Activated B cell treated with CpG ODN at 0.5 μM for 24 hours (primary cell): ENCODE measurements at regions of chr3 and their contacts with region 1.

Region 1: GRCh38 chr3:123584988-123585937 is at the start of gene HACD2:
- DNase-seq: peak; percentile 94
- ATAC-seq: peak; percentile 93
- H3K4me3 Mint-ChIP-seq: no peak within 1 kb of the TSS
- H3K27ac Mint-ChIP-seq: peak within 1 kb of the TSS; percentile 82
- H3K4me1 Mint-ChIP-seq: peaks cover 25% of the 10 kb centered on the region
- H3K27me3 Mint-ChIP-seq: no peaks in the 10 kb centered on the region
- CTCF ChIP-seq: no peak
- total RNA-seq, gene HACD2: 31.9 and 32.9 TPM in 2 replicates

Region 2: DNA sequence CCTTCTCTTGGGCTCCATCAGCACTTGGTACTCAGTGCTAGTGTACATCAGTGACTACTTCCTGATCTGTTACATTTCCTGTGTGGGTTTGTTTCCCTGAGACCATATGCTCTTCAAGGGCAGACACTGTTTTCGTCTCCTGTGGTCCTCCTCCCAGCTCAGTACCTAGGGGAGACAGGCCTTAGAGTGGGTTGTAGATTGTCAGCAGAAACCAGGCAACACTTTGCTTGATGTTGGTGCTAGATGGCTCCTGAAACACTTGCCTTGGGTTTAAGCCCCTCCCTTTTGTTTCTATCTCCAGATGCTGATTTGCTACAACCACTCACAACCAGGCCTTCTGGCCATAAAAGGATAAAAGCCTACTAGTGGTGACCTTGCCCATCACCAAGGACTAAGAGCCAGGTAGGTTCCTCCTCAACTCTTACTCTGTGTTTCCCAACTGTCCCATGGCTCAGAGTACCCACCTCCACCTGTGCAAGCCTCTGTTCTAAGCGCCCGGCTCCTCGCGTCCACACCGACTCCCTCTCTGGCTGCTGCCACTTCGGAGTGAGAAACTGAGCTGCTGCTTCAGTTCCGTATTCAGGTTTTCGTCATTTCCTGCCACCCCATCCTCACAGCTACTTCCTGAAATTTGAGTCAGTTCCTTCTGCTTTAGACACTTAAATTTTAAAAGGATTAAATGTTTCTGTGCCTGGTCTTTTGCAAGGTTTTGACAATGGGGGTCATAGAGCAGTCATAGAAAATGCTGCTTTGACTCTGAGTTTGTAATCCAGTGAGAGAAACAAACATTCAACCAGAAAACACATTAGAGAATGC is 1924.7 kb before region 1 on chr3 and contains the start of gene HCLS1:
- CTCF ChIA-PET with region 1: no interaction called
- POLR2A ChIA-PET with region 1: no interaction called
- intact Hi-C with region 1: loop called (anchors 10 kb)
- DNase-seq: peak; percentile 73
- ATAC-seq: peak; percentile 85
- H3K4me3 Mint-ChIP-seq: peak within 1 kb of the TSS; percentile 90
- H3K27ac Mint-ChIP-seq: peak within 1 kb of the TSS; percentile 96
- H3K4me1 Mint-ChIP-seq: peaks cover 55% of the 10 kb centered on the region
- H3K27me3 Mint-ChIP-seq: no peaks in the 10 kb centered on the region
- CTCF ChIP-seq: no peak
- total RNA-seq, gene HCLS1: 434 and 440 TPM in 2 replicates

Region 3: GRCh38 chr3:122383771-122384697 is 1201.2 kb before region 1 on chr3 and contains the start of gene FAM162A:
- CTCF ChIA-PET with region 1: no interaction called
- POLR2A ChIA-PET with region 1: no interaction called
- intact Hi-C with region 1: loop called (anchors 1 kb)
- DNase-seq: peak; percentile 93
- ATAC-seq: peak; percentile 94
- H3K4me3 Mint-ChIP-seq: peak within 1 kb of the TSS; percentile 94
- H3K27ac Mint-ChIP-seq: peak within 1 kb of the TSS; percentile 91
- H3K4me1 Mint-ChIP-seq: peaks cover 38% of the 10 kb centered on the region
- H3K27me3 Mint-ChIP-seq: no peaks in the 10 kb centered on the region
- CTCF ChIP-seq: no peak
- total RNA-seq, gene FAM162A: 28.5 and 33.9 TPM in 2 replicates

Region 4: DNA sequence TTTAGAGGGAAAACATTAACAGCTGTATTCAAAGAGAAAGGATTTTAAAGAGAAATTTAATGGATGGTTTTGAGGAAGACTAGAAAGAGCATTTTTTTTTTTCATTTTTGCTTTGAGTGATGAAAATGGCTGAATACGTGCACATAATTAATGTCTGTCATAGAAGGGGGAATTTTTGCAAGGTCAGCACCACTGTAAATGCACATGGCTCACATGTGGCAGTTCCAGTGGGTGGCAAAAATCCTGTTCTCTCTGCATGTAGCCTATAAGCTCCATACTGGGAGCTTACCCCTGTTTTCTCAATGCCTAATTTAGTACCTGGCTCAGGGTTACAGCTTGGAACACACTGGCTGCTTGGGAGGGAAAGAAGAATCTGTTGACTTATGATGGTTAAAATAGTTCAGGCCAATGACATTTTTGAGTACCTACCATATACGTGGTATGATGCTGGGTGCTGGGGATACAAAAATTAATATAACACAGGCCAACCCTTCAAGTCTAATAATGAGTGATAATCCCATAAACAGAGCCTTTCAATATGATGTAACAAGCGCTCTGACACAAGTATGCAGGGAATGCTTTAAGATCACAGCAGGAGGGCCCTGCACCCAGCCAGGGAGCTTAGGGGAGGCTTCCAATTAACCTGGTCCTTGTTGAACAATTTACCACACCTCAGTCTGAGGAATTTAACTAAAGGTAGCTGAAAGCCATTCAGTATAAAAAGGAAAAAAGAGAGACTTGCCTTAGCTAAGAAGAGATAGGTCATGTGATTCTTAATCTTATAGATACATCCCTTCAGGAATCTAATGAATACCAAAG is 824.6 kb before region 1 on chr3:
- CTCF ChIA-PET with region 1: no interaction called
- POLR2A ChIA-PET with region 1: interaction called, 10 read pairs
- intact Hi-C with region 1: no loop called
- DNase-seq: no peak
- ATAC-seq: no peak
- H3K4me3 Mint-ChIP-seq: no peak overlapping the region
- H3K27ac Mint-ChIP-seq: no peak overlapping the region
- H3K4me1 Mint-ChIP-seq: peaks cover 9% of the 10 kb centered on the region
- H3K27me3 Mint-ChIP-seq: no peaks in the 10 kb centered on the region
- CTCF ChIP-seq: no peak

Region 5: DNA sequence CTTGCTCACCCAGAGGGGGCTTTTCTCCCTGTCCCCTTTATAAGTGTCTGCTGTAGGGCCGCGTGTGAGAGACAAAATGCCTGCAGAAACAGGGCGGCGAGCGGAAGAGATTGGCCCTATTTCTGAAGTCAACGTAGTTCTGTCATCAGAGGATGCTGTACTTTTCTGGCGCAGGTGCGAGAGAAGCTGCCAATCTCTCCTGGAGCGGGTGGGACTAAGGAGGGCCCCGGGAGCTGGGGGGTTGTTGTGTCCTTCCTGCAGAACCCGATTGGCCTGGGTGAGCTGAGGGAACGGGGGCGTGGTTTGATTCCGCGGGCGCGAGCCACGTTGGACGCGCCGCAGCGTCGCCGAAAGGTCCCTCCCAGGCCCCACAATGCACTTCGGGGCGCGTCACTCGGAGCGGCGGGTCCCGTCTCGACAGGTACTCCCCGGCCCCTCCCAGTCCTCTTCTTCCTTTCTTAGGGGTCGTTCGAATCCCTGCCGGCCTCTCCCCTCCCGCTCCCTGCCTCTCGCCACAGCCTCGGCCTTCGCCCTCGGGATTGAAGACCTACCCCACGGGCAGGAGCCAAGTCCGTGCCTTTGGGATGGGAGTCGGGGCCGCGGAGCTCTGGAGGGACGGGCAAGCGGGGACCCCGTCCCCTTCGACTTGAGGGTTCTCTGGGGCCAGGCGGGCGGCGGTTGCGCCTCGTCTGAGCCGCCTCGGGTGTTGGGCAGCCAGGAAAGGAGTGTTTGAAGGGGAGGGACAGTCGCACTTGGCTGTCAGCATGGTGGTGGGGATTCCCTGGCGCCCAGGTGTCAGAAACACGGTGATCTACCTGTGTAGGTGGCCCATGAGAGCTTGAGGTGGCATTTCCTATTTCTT is 383.5 kb before region 1 on chr3 and contains the start of gene SEC22A:
- CTCF ChIA-PET with region 1: no interaction called
- POLR2A ChIA-PET with region 1: no interaction called
- intact Hi-C with region 1: loop called (anchors 1 kb)
- DNase-seq: peak; percentile 88
- ATAC-seq: peak; percentile 96
- H3K4me3 Mint-ChIP-seq: peak within 1 kb of the TSS; percentile 96
- H3K27ac Mint-ChIP-seq: peak within 1 kb of the TSS; percentile 97
- H3K4me1 Mint-ChIP-seq: peaks cover 16% of the 10 kb centered on the region
- H3K27me3 Mint-ChIP-seq: peaks cover under 1% of the 10 kb centered on the region
- CTCF ChIP-seq: no peak
- total RNA-seq, gene SEC22A: 13.5 and 15.9 TPM in 2 replicates

Region 6: DNA sequence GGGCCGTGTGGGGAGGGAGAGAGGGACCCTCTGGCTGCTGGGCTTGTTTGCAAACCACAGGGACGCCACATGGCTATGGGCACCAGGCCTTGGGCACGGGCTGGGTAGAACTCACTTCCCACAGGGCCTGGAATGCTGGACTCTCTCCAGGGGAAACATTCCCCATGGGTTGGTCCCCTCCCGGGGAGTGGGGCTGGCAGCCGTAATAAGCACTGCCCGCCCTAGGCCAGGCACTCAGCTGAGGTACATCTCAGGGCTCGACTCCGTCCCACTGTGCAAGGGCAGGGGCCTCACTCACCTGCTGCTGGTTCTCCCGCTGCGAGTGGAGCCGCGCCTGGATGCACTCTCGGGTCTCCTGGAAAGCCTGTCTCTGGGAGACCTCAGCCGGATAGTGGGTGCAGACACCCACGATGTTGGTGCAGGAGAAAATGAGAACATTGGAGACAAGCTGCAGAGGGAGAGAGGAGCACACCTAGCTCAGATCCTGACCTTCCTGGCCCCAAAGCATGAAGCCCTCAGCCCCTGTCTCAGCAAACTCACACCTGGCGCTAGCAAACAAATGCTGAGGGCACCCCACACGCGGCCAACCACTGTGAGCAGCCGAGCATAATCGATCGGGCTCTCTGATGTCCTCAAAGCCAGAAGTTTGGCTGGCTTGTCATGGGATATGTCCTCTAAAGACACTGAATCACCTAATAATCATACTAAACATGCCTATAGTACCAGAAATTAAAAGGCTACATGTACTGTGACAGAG is 233.0 kb before region 1 on chr3:
- CTCF ChIA-PET with region 1: no interaction called
- POLR2A ChIA-PET with region 1: no interaction called
- intact Hi-C with region 1: no loop called
- DNase-seq: no peak
- ATAC-seq: no peak
- H3K4me3 Mint-ChIP-seq: no peak overlapping the region
- H3K27ac Mint-ChIP-seq: no peak overlapping the region
- H3K4me1 Mint-ChIP-seq: no peaks in the 10 kb centered on the region
- H3K27me3 Mint-ChIP-seq: peaks cover 31% of the 10 kb centered on the region
- CTCF ChIP-seq: no peak

Region 7: GRCh38 chr3:123552095-123552714 is 33.1 kb before region 1 on chr3:
- CTCF ChIA-PET with region 1: no interaction called
- POLR2A ChIA-PET with region 1: no interaction called
- intact Hi-C with region 1: no loop called
- DNase-seq: no peak
- ATAC-seq: no peak
- H3K4me3 Mint-ChIP-seq: no peak overlapping the region
- H3K27ac Mint-ChIP-seq: no peak overlapping the region
- H3K4me1 Mint-ChIP-seq: peaks cover 4% of the 10 kb centered on the region
- H3K27me3 Mint-ChIP-seq: no peaks in the 10 kb centered on the region
- CTCF ChIP-seq: no peak

Region 8: GRCh38 chr3:123642182-123642956 is 57.1 kb after region 1 on chr3:
- CTCF ChIA-PET with region 1: interaction called, 4 read pairs
- POLR2A ChIA-PET with region 1: no interaction called
- intact Hi-C with region 1: loop called (anchors 2 kb)
- DNase-seq: peak; percentile 28
- ATAC-seq: peak; percentile 70
- H3K4me3 Mint-ChIP-seq: no peak overlapping the region
- H3K27ac Mint-ChIP-seq: no peak overlapping the region
- H3K4me1 Mint-ChIP-seq: no peaks in the 10 kb centered on the region
- H3K27me3 Mint-ChIP-seq: no peaks in the 10 kb centered on the region
- CTCF ChIP-seq: no peak

Region 9: DNA sequence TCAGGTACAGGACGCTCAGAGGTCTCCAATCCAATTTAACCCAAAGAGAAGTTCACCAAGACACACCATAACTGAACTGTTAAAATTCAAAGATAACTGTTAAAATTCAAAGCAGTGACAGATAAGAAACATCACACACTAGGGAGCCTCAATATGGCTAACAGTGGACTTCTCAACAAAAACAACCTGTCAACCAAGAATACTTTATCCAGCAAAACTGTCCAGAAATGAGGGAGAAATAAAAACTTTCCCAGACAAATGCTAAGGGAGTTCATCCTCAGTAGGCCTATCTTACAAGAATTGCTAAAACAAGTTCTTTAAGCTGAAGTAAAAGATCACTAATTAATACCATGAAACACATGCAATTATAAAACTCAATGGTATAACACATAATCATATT is 335.1 kb after region 1 on chr3:
- CTCF ChIA-PET with region 1: no interaction called
- POLR2A ChIA-PET with region 1: no interaction called
- intact Hi-C with region 1: no loop called
- DNase-seq: no peak
- ATAC-seq: no peak
- H3K4me3 Mint-ChIP-seq: no peak overlapping the region
- H3K27ac Mint-ChIP-seq: no peak overlapping the region
- H3K4me1 Mint-ChIP-seq: no peaks in the 10 kb centered on the region
- H3K27me3 Mint-ChIP-seq: no peaks in the 10 kb centered on the region
- CTCF ChIP-seq: no peak

Region 10: GRCh38 chr3:123949641-123950040 is 364.4 kb after region 1 on chr3:
- CTCF ChIA-PET with region 1: no interaction called
- POLR2A ChIA-PET with region 1: no interaction called
- intact Hi-C with region 1: no loop called
- DNase-seq: no peak
- ATAC-seq: no peak
- H3K4me3 Mint-ChIP-seq: no peak overlapping the region
- H3K27ac Mint-ChIP-seq: no peak overlapping the region
- H3K4me1 Mint-ChIP-seq: peaks cover 6% of the 10 kb centered on the region
- H3K27me3 Mint-ChIP-seq: no peaks in the 10 kb centered on the region
- CTCF ChIP-seq: no peak

Region 11: DNA sequence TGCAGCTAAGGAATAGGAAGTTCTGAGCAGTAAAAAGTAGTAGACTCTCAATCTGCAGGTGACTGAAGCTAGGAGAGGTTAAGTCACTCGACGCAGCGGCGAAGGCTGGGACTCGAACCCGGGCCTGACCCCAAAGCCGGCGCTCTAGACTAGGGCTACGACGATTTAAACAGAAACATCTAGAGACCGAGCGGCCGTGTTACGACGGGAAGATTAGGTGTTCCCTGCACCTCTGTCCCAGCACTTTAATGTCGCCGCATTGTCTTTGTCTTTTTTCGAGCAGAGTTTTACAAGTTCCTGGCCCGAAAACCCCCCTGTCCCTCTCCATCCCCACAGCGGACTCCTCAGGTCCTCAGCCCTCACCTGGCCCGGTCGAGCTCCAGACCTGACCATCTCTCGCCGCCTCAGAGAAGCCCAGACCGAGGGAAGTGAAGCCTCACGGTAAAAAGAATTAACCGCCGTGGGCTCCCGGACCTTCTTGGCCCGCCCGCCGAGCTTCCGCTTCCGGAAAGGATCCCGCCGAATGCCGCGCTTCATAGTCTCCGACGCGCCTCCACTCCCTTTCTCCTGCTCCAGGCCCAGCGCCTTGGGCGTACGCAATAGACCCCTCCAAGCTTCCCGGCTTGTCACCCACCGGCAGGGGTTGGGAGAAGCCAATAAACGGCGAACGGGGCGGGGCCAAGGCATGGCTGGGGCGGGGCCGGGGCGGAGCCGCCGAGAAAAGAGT is 375.7 kb after region 1 on chr3 and contains the start of gene CCDC14:
- CTCF ChIA-PET with region 1: no interaction called
- POLR2A ChIA-PET with region 1: no interaction called
- intact Hi-C with region 1: loop called (anchors 10 kb)
- DNase-seq: peak; percentile 68
- ATAC-seq: peak; percentile 87
- H3K4me3 Mint-ChIP-seq: peak within 1 kb of the TSS; percentile 98
- H3K27ac Mint-ChIP-seq: peak within 1 kb of the TSS; percentile 87
- H3K4me1 Mint-ChIP-seq: peaks cover 20% of the 10 kb centered on the region
- H3K27me3 Mint-ChIP-seq: peaks cover 9% of the 10 kb centered on the region
- CTCF ChIP-seq: no peak
- total RNA-seq, gene CCDC14: 24.9 and 30.1 TPM in 2 replicates